ENCODE measurements at regions of chr1 and their contacts with region 1.

Region 1: GRCh38 chr1:150890033-150890416 is 3.1 kb downstream of the CTXND2 start:
- DNase-seq: no peak
- H3K4me3 ChIP-seq: no peak overlapping the region
- H3K27ac ChIP-seq: no peak overlapping the region
- H3K4me1 ChIP-seq: no peaks in the 10 kb centered on the region
- H3K27me3 ChIP-seq: no peaks in the 10 kb centered on the region
- CTCF ChIP-seq: no peak

Region 2: GRCh38 chr1:150863724-150864123 is 26.3 kb before region 1 on chr1:
- CTCF ChIA-PET with region 1: no interaction called
- dilution Hi-C with region 1: loop called (anchors 5 kb)
- in situ Hi-C with region 1: no loop called
- intact Hi-C with region 1: no loop called
- DNase-seq: no peak
- H3K4me3 ChIP-seq: no peak overlapping the region
- H3K27ac ChIP-seq: no peak overlapping the region
- H3K4me1 ChIP-seq: no peaks in the 10 kb centered on the region
- H3K27me3 ChIP-seq: no peaks in the 10 kb centered on the region
- CTCF ChIP-seq: no peak

Region 3: DNA sequence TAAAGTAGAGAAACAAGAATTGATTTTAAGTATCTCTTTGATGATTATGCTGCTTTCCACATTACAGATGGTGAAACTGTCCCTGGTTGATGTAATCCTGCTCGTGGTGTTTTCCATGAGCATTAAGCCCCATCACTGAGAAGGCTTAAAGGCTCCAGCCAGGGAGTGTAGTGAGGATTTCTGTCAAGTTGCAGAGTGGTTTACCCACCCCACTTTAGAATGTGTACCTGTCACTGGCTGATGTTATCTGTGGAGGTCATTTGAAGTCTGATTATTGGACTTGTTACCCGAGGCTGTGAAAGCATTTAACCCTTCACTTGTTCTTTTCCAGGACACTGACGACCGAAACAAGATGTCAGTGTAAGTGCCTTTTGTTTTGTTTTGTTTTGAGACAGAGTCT is 71.8 kb after region 1 on chr1:
- CTCF ChIA-PET with region 1: no interaction called
- dilution Hi-C with region 1: loop called (anchors 5 kb)
- in situ Hi-C with region 1: no loop called
- intact Hi-C with region 1: no loop called
- DNase-seq: no peak
- H3K4me3 ChIP-seq: no peak overlapping the region
- H3K27ac ChIP-seq: no peak overlapping the region
- H3K4me1 ChIP-seq: no peaks in the 10 kb centered on the region
- H3K27me3 ChIP-seq: no peaks in the 10 kb centered on the region
- CTCF ChIP-seq: no peak